ENCODE measurements at regions of chr6 and their contacts with region 1.

Region 1: DNA sequence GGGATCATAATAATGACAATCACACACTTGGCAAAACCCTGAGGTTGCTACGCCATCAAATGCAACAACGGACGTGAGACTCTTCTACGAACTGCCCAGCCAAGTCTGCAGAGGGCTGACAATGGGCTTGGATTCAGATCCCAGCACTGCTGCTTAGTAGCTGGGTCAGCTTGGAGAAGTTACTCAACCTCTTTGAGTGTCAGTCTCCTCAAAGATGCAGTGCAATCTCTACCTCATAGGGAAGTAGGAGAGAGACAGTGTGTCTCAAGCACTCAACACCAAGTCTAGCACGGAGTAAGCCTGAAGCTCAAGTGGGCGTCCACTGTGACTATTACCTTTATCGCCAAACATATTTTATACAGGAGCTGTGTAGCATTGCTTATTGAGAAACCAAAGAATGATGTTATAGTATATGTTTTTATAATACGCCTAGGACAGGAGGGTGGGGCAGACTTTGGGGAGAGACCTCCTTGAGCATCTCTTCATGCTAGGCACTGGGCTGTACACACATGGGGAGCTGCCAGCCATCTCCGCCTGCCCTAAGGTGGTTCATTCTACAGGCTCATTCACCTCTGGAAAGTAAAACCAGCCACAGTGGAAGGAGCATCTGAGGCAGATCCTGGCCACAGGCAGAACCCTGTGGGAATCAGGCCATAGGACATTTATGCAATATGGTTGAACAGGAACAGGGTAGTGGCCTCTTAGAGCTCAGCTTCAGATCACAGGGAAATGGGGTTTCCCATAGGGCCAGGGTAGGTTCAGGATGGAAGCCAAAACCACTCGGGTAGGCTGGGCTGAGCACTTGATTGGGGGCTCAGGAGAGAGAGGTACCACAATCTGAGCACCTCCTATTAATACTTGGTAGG is 160.2 kb downstream of the MRPL14 start:
- DNase-seq: peak in 1 of 42 donors; percentile 32

Region 2: GRCh38 chr6:43900911-43901732 is 66.0 kb before region 1 on chr6:
- intact Hi-C with region 1: loop called (anchors 2 kb)
- DNase-seq: no peak

Region 3: DNA sequence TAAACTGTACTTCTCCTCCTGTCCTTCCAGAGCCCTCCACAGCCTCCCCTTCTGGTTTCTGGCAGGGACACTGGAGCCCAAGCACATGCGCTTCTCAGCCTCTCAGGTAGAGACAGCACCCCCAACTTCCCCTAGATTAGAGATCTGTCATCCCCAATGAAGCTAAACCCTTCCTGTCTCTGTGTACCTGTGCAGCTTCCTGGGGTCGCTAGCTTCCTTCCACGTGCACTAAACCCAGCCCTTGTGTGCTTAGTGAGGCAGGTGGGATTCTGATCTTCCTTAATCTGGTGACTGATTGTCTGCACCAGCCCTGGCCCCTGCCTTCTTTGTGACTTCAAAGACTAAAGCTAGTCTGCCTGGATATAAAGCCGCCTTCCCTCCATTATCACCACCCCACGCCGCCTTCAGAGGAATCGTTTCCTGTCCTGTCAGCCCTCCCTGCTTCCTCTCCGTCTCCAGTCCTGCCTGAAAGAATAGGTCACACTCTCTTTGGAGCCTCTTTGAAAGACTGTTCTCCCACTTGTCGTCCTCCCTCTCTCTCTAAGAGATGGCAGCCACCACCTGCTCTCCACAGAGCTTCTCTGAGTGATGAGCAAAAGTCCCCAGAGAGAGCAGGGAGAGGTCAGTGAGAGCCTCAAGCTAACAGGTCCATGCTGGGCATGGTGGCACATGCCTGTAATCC is 219.0 kb after region 1 on chr6:
- intact Hi-C with region 1: no loop called
- DNase-seq: no peak

Measured in head of caudate nucleus (tissue), 42 donors.